WTC11 (cell line): ENCODE measurements at regions of chr22 and their contacts with region 1.

Region 1: DNA sequence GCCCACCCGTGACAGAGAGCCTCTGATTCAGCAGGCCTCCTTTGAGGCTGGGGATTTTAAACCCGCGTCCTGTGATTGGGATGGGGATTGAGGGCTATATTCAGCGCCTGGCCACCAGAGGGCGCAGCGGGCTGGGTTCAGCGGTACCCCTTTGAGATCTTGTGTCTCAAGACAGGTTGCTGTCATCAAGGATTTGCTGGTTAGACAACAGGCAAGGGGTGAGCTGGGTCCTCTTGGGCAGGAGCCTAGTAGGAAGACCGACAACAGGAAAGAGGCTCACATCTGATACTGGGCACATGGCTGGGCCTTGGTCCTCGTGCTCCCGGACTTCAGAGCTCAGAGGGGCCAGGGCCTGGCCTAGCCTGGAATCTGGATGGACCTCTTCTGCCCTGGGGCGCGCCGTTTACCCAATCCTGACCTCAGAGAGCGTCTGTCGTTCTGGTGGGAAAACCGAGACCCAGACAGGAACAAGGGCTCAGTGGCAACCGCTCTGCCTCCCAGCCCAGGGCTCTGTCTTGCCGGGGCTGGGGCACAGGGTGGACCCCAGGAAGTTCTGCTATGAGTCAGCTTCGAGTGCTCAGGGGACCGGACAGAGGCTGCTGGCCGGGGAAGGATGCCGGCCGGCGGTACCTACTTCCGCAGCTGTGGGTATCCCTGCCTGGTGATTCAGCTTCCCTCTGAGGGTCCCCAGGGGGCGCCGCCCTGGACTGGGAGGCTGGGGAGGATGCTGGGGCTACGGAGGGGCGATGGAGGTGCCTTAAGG is 929 bp upstream of the SLC35E4 start:
- DNase-seq: peak; percentile 92
- ATAC-seq: peak; percentile 49
- H3K4me3 Mint-ChIP-seq: peak overlapping the region; percentile 65
- H3K27ac Mint-ChIP-seq: 0 out of 2 replicates have a peak overlapping the region, but pooled peaks have one; percentile 15
- H3K4me1 Mint-ChIP-seq: peaks cover 18% of the 10 kb centered on the region
- H3K27me3 Mint-ChIP-seq: 0 out of 2 replicates have a peak, but pooled peaks cover 7% of the 10 kb centered on the region
- CTCF ChIP-seq: peak; percentile 94

Region 2: GRCh38 chr22:30523776-30524489 is 110.7 kb before region 1 on chr22:
- CTCF ChIA-PET with region 1: no interaction called
- POLR2A ChIA-PET with region 1: no interaction called
- DNase-seq: no peak
- ATAC-seq: no peak
- H3K4me3 Mint-ChIP-seq: no peak overlapping the region
- H3K27ac Mint-ChIP-seq: no peak overlapping the region
- H3K4me1 Mint-ChIP-seq: no peaks in the 10 kb centered on the region
- H3K27me3 Mint-ChIP-seq: no peaks in the 10 kb centered on the region; the same call in 1 of the 2 replicates
- CTCF ChIP-seq: no peak

Region 3: DNA sequence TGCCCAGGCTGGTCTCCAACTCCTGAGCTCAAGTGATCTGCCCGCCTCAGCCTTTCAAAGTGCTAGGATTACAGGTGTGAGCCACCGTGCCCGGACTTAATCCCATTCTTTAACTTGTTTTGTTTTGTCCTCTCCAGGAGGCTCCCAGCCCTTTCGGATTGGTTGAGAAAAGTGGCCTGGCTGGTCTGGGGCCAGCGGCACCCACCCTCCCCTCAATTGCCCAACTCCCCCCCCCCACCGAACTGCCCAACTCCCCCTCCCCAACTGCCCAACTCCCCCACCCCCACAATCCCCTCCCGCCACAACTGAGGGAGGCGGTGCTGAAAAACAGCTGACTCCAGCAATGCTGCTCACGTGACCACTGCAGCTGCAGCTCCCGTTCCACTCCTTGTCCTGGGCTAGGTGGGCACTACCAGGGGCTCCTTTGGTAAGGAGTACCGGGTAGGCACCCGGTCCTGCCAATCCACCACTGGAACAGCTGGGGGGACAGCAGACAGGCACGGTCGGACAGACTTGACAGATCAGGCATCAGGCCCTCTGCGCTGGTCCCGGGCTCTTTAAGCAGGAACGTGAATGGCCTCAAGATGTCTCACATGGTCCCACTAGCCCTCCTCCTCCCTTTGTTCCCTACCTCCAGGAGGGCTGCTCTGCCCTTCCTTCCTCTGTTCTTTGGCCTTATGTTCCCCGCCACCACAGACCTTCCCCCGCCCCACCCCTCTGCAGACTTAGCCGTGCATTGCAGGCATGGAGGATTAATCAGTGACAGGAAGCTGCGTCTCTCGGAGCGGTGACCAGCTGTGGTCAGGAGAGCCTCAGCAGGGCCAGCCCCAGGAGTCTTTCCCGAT is 28.0 kb before region 1 on chr22 and contains the start of gene TCN2:
- CTCF ChIA-PET with region 1: interaction called, 43 read pairs
- POLR2A ChIA-PET with region 1: interaction called, 5 read pairs
- DNase-seq: peak; percentile 89
- ATAC-seq: peak; percentile 85
- H3K4me3 Mint-ChIP-seq: peak within 1 kb of the TSS; percentile 81
- H3K27ac Mint-ChIP-seq: peak within 1 kb of the TSS; percentile 99
- H3K4me1 Mint-ChIP-seq: peaks cover 40% of the 10 kb centered on the region
- H3K27me3 Mint-ChIP-seq: no peaks in the 10 kb centered on the region
- CTCF ChIP-seq: no peak
- total RNA-seq, gene TCN2: 34.7 to 39.0 TPM (median 36.7 TPM) in 3 replicates

Region 4: GRCh38 chr22:30655532-30655931 is 20.9 kb after region 1 on chr22:
- CTCF ChIA-PET with region 1: interaction called, 35 read pairs
- POLR2A ChIA-PET with region 1: no interaction called
- DNase-seq: no peak
- ATAC-seq: peak; percentile 85
- H3K4me3 Mint-ChIP-seq: no peak overlapping the region
- H3K27ac Mint-ChIP-seq: peak overlapping the region; percentile 52
- H3K4me1 Mint-ChIP-seq: peaks cover 31% of the 10 kb centered on the region
- H3K27me3 Mint-ChIP-seq: peaks cover 10% of the 10 kb centered on the region
- CTCF ChIP-seq: no peak

Region 5: DNA sequence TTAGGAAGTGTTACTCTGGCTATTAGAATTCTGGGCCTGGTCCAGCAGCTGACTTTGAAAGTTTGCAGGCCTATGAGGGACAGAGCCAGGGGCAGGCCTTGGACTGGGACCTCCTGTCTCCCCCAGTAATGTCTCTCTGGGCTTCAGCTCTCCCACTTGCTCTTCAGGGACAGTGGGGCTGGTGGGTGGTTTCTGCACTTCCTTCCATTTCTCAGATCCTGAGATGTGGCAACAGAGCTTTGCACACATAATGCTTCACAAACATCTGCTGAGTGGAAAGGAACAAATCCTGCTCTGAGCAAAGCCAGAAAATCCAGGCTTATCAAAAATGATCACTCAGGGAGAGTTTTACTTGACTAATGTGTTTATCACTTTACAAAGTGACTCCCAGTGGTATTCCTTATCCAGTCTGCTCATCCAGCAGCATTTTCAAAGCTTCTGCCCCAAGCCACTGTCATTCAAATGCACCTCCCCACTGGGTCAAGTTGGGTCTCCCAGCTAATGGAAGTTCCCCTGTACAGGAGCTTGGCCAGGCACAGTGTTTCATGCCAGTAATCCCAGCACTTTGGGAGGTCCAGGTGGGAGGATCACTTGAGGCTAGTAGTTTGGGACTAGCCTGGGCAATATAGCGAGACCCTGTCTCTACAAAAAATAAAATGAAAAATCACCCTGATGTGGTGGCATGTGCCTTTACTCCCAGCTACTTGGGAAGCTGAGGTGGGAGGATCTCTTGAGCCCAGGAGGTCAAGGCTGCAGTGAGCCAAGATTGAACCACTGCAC is 46.5 kb after region 1 on chr22:
- CTCF ChIA-PET with region 1: interaction called, 23 read pairs
- POLR2A ChIA-PET with region 1: interaction called, 4 read pairs
- DNase-seq: no peak
- ATAC-seq: no peak
- H3K4me3 Mint-ChIP-seq: no peak overlapping the region
- H3K27ac Mint-ChIP-seq: no peak overlapping the region
- H3K4me1 Mint-ChIP-seq: peaks cover 25% of the 10 kb centered on the region
- H3K27me3 Mint-ChIP-seq: peaks cover under 1% of the 10 kb centered on the region; the same call in 1 of the 2 replicates
- CTCF ChIP-seq: no peak

Region 6: GRCh38 chr22:30712094-30712493 is 77.4 kb after region 1 on chr22:
- CTCF ChIA-PET with region 1: no interaction called
- POLR2A ChIA-PET with region 1: no interaction called
- DNase-seq: no peak
- ATAC-seq: no peak
- H3K4me3 Mint-ChIP-seq: no peak overlapping the region
- H3K27ac Mint-ChIP-seq: no peak overlapping the region
- H3K4me1 Mint-ChIP-seq: no peaks in the 10 kb centered on the region
- H3K27me3 Mint-ChIP-seq: no peaks in the 10 kb centered on the region
- CTCF ChIP-seq: no peak

Region 7: DNA sequence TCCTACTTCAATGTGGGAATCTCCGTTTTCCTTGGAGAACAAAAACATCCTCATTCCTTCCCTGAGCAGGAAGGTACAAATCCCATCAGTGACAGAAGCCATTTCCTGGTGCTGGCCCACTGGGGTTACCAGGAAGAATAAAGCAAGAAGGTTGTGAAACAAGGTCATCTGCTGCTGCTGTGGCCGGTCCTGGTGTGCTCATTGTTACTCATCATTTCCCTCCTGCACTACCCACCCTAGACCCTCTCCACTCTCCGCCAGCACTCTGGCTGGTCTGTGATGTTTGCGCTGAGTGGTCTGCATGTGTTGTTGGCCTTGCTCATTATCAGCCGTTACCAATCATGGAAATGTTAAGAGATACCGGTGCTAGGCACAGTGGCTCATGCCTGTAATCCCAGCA is 97.0 kb after region 1 on chr22:
- CTCF ChIA-PET with region 1: interaction called, 11 read pairs
- POLR2A ChIA-PET with region 1: no interaction called
- DNase-seq: no peak
- ATAC-seq: no peak
- H3K4me3 Mint-ChIP-seq: no peak overlapping the region
- H3K27ac Mint-ChIP-seq: no peak overlapping the region
- H3K4me1 Mint-ChIP-seq: peaks cover 2% of the 10 kb centered on the region; the same call in 1 of the 2 replicates
- H3K27me3 Mint-ChIP-seq: no peaks in the 10 kb centered on the region; the same call in 1 of the 2 replicates
- CTCF ChIP-seq: no peak

Region 8: GRCh38 chr22:30802202-30803166 is 167.8 kb after region 1 on chr22:
- CTCF ChIA-PET with region 1: interaction called, 15 read pairs
- POLR2A ChIA-PET with region 1: no interaction called
- DNase-seq: peak; percentile 92
- ATAC-seq: peak; percentile 93
- H3K4me3 Mint-ChIP-seq: peak overlapping the region; percentile 62
- H3K27ac Mint-ChIP-seq: no peak overlapping the region
- H3K4me1 Mint-ChIP-seq: peaks cover 25% of the 10 kb centered on the region
- H3K27me3 Mint-ChIP-seq: peaks cover 54% of the 10 kb centered on the region
- CTCF ChIP-seq: no peak